Activated CD4-positive, alpha-beta memory T cell treated with anti-CD3 and anti-CD28 coated beads for 36 hours (primary cell): ENCODE measurements at regions of chr10 and their contacts with region 1.

Region 1: GRCh38 chr10:73886085-73886529 is 11.8 kb upstream of the CAMK2G start:
- DNase-seq: peak; percentile 78
- H3K4me3 Mint-ChIP-seq: no peak overlapping the region
- H3K27ac Mint-ChIP-seq: no peak overlapping the region
- H3K4me1 Mint-ChIP-seq: peaks cover 2% of the 10 kb centered on the region
- H3K27me3 Mint-ChIP-seq: no peaks in the 10 kb centered on the region

Region 2: DNA sequence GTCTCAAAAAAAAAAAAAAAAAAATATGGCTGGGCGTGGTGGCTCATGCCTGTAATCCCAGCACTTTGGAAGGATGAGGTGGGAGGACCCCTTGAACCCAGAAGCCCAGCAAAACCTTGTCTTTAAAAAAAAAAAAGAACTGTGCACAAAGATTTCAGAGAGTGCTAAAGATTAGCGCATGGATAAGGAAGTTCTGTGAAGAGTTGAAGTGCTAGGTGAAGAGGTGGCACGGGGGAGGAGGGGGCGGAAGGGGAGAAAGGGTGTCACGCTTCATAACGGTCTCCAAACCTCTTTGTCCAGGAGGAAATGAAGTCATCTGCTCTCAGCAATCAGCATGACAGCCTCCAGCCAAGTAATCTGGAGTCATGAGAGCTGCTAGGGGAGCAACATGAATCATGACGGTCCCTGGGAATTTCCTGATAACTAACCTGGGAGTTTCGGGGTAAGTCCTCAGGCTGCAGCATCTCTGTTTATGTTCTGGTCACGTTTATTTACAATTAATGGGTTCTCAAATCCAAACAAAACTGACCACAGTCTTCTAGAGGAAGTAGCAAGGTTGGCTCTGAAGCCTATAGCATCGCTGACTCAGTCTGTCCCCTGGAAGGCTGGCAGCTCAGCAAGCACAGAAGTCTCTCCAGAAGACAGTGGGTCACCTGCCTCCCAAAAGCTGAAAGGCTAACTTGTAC is 22.9 kb after region 1 on chr10:
- CTCF ChIA-PET with region 1: interaction called, 9 read pairs
- POLR2A ChIA-PET with region 1: no interaction called
- intact Hi-C with region 1: loop called (anchors 2 kb)
- DNase-seq: peak; percentile 87
- H3K4me3 Mint-ChIP-seq: peak overlapping the region; percentile 40
- H3K27ac Mint-ChIP-seq: peak overlapping the region; percentile 52
- H3K4me1 Mint-ChIP-seq: peaks cover 36% of the 10 kb centered on the region
- H3K27me3 Mint-ChIP-seq: peaks cover 38% of the 10 kb centered on the region

Region 3: GRCh38 chr10:73931767-73932619 is 45.9 kb after region 1 on chr10:
- CTCF ChIA-PET with region 1: interaction called, 383 read pairs
- POLR2A ChIA-PET with region 1: no interaction called
- intact Hi-C with region 1: loop called (anchors 2 kb)
- DNase-seq: peak; percentile 84
- H3K4me3 Mint-ChIP-seq: no peak overlapping the region
- H3K27ac Mint-ChIP-seq: peak overlapping the region; percentile 69
- H3K4me1 Mint-ChIP-seq: peaks cover 15% of the 10 kb centered on the region
- H3K27me3 Mint-ChIP-seq: no peaks in the 10 kb centered on the region

Region 4: GRCh38 chr10:74096777-74097176 is 210.7 kb after region 1 on chr10:
- CTCF ChIA-PET with region 1: interaction called, 14 read pairs
- POLR2A ChIA-PET with region 1: no interaction called
- intact Hi-C with region 1: no loop called
- DNase-seq: no peak
- H3K4me3 Mint-ChIP-seq: no peak overlapping the region
- H3K27ac Mint-ChIP-seq: no peak overlapping the region
- H3K4me1 Mint-ChIP-seq: no peaks in the 10 kb centered on the region
- H3K27me3 Mint-ChIP-seq: no peaks in the 10 kb centered on the region